ENCODE measurements at regions of chr12 and their contacts with region 1.

Region 1: GRCh38 chr12:64669270-64669842 is 59.1 kb downstream of the RASSF3 start:
- DNase-seq: peak in 30 of 35 experiments; percentile 23 to 88 (median 52)
- ATAC-seq: peak; percentile 87 to 90 (median 88)
- H3K4me3 ChIP-seq: peak overlapping the region; percentile 56 to 75
- H3K4me3 Mint-ChIP-seq: peak overlapping the region; percentile 76 to 90 (median 82)
- H3K27ac ChIP-seq: peak overlapping the region; percentile 91
- H3K27ac Mint-ChIP-seq: peak overlapping the region; percentile 97 to 99
- H3K4me1 ChIP-seq: peaks cover 91 to 93% of the 10 kb centered on the region in 2 experiments
- H3K4me1 Mint-ChIP-seq: peaks cover 94 to 97% (median 95%) of the 10 kb centered on the region in 3 donors
- H3K27me3 ChIP-seq: no peaks in the 10 kb centered on the region
- H3K27me3 Mint-ChIP-seq: no peaks in the 10 kb centered on the region

Region 2: GRCh38 chr12:64318605-64319004 is 350.8 kb before region 1 on chr12:
- CTCF ChIA-PET with region 1: no interaction called
- POLR2A ChIA-PET with region 1: no interaction called
- DNase-seq: no peak
- ATAC-seq: no peak
- H3K4me3 ChIP-seq: no peak overlapping the region
- H3K4me3 Mint-ChIP-seq: no peak overlapping the region
- H3K27ac ChIP-seq: no peak overlapping the region
- H3K27ac Mint-ChIP-seq: no peak overlapping the region
- H3K4me1 ChIP-seq: no peaks in the 10 kb centered on the region
- H3K4me1 Mint-ChIP-seq: no peaks in the 10 kb centered on the region
- H3K27me3 ChIP-seq: peaks cover 0 to 2% of the 10 kb centered on the region in 2 experiments
- H3K27me3 Mint-ChIP-seq: no peaks in the 10 kb centered on the region

Region 3: DNA sequence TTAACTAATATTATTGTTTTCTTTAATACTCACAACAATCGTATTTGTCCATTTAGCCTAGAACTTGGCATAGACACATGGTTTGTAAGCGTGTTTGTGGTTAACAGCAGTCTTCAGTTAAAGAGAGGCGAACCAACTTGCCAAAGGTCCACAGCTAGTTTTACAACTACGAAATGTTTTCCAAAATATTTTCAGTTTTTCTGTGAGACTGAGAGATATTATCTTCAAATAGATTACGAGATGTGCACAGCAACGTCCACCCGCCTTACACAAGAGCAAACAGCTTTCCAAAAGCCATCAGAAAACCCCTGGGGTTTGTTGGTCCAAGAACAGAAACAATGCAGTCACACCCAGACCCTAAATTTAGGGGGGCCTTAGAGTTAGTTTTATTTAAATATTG is 117.7 kb before region 1 on chr12:
- CTCF ChIA-PET with region 1: interaction called, 4 to 17 read pairs
- POLR2A ChIA-PET with region 1: no interaction called
- DNase-seq: no peak
- ATAC-seq: no peak
- H3K4me3 ChIP-seq: no peak overlapping the region
- H3K4me3 Mint-ChIP-seq: no peak overlapping the region
- H3K27ac ChIP-seq: no peak overlapping the region
- H3K27ac Mint-ChIP-seq: no peak overlapping the region
- H3K4me1 ChIP-seq: peaks cover 3 to 4% of the 10 kb centered on the region in 2 experiments
- H3K4me1 Mint-ChIP-seq: peaks cover 7 to 13% (median 10%) of the 10 kb centered on the region in 3 donors
- H3K27me3 ChIP-seq: peaks cover 0 to 4% of the 10 kb centered on the region in 2 experiments
- H3K27me3 Mint-ChIP-seq: peaks cover 0 to 2% of the 10 kb centered on the region in 2 donors

Region 4: DNA sequence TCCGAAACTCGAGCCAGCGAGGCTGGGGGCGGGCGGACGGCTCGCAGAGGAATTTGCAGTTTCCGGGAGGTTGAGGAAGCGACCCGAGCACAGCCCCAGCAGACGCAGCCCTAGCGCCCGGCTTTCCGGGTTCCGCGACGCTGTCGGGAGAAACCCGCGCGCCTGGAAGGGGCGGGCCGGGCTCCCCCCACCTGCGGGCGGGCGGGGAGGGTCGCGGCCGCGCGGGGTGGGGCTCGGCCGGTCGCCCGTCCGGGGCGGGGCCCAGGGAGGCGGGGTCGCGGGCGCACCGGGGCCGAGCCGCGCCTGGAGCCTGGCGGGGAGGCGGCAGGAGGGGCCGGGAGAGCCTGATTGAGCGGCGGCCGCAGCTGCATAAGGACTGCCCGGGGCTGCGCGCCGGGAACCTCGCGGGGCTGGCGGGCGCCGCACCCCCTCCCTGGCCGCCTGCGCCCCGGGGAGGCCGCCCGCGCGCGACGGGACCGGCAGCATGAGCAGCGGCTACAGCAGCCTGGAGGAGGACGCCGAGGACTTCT is 59.1 kb before region 1 on chr12 and contains the start of gene RASSF3:
- CTCF ChIA-PET with region 1: interaction called, 4 read pairs
- POLR2A ChIA-PET with region 1: interaction called, 9 to 11 read pairs
- DNase-seq: peak; percentile 43 to 87 (median 62)
- ATAC-seq: peak; percentile 66 to 73 (median 70)
- H3K4me3 ChIP-seq: peak within 1 kb of the TSS; percentile 84 to 92
- H3K4me3 Mint-ChIP-seq: peak within 1 kb of the TSS; percentile 93 to 99 (median 97)
- H3K27ac ChIP-seq: peak within 1 kb of the TSS; percentile 78
- H3K27ac Mint-ChIP-seq: peak within 1 kb of the TSS; percentile 96 to 99
- H3K4me1 ChIP-seq: peaks cover 19 to 34% of the 10 kb centered on the region in 2 experiments
- H3K4me1 Mint-ChIP-seq: peaks cover 38 to 51% (median 50%) of the 10 kb centered on the region in 3 donors
- H3K27me3 ChIP-seq: no peaks in the 10 kb centered on the region
- H3K27me3 Mint-ChIP-seq: no peaks in the 10 kb centered on the region
- total RNA-seq, gene RASSF3: 113 to 167 (median 149) TPM

Region 5: GRCh38 chr12:64616201-64616600 is 53.2 kb before region 1 on chr12:
- CTCF ChIA-PET with region 1: interaction called, 4 to 5 read pairs
- POLR2A ChIA-PET with region 1: interaction called, 8 to 10 read pairs
- DNase-seq: no peak
- ATAC-seq: no peak
- H3K4me3 ChIP-seq: no peak overlapping the region
- H3K4me3 Mint-ChIP-seq: peak overlapping the region; percentile 17 to 97 (median 38)
- H3K27ac ChIP-seq: no peak overlapping the region
- H3K27ac Mint-ChIP-seq: peak overlapping the region; percentile 77 to 78
- H3K4me1 ChIP-seq: peaks cover 28 to 51% of the 10 kb centered on the region in 2 experiments
- H3K4me1 Mint-ChIP-seq: peaks cover 76 to 84% (median 79%) of the 10 kb centered on the region in 3 donors
- H3K27me3 ChIP-seq: no peaks in the 10 kb centered on the region
- H3K27me3 Mint-ChIP-seq: no peaks in the 10 kb centered on the region

Region 6: DNA sequence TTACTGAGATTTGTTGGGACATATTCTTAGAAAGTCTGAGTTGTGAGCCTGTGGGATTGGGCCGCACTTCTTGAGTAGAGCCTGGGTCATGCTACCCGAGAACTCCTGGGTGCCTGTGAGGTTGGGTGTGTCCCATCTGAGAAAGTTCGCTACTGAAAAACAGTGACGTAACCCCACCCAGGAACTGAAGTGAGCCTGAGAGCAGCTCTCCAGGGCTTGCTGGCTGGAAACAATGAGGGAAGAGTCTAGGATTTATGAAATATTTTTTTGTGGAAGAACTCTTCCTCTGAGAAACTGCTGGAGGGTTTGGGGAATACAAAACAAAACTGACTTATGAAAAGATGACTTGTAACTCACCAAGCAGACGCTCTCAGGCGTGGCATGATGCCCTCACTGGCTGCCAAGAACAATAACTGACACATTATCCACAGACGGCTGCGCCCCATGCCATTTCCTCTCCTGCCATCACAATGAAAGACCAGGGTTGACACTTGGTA is 10.2 kb after region 1 on chr12:
- CTCF ChIA-PET with region 1: interaction called, 6 to 25 read pairs
- POLR2A ChIA-PET with region 1: interaction called, 7 to 32 read pairs
- DNase-seq: peak in 34 of 35 experiments; percentile 62 to 86 (median 76)
- ATAC-seq: peak; percentile 63 to 71 (median 68)
- H3K4me3 ChIP-seq: peak overlapping the region in 1 of 2 donors; percentile 10
- H3K4me3 Mint-ChIP-seq: peak overlapping the region; percentile 64 to 68 (median 67)
- H3K27ac ChIP-seq: peak overlapping the region; percentile 93
- H3K27ac Mint-ChIP-seq: peak overlapping the region; percentile 98 to 99
- H3K4me1 ChIP-seq: peaks cover 87 to 98% of the 10 kb centered on the region in 2 experiments
- H3K4me1 Mint-ChIP-seq: peaks cover 91 to 98% (median 97%) of the 10 kb centered on the region in 3 donors
- H3K27me3 ChIP-seq: no peaks in the 10 kb centered on the region
- H3K27me3 Mint-ChIP-seq: no peaks in the 10 kb centered on the region

Region 7: DNA sequence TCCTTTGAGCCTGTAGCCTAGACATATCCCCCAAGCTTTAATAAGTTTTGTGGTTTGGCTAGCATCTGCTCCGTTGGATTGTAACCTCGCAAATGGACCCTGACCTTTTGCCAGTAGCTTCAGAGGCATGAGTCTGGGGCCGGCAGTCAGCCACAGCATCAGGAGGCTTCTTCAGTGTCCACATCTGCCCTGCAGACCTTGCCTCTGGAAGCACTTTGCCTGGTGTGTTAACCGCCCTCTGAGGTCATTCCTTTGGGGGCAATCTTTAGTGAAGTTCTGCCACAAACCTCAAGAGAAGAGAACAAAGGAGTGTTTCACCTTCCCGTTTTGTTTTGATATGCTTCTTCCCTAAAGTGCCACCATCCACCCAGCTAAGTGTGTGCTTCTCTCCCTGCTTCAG is 18.5 kb after region 1 on chr12:
- CTCF ChIA-PET with region 1: interaction called, 8 to 13 read pairs
- POLR2A ChIA-PET with region 1: interaction called, 6 to 7 read pairs
- DNase-seq: peak in 1 of 35 experiments; percentile 28
- ATAC-seq: peak in 1 of 4 experiments; percentile 11
- H3K4me3 ChIP-seq: no peak overlapping the region
- H3K4me3 Mint-ChIP-seq: peak overlapping the region; percentile 29 to 73 (median 51)
- H3K27ac ChIP-seq: peak overlapping the region; percentile 68
- H3K27ac Mint-ChIP-seq: peak overlapping the region; percentile 88 to 94
- H3K4me1 ChIP-seq: peaks cover 57 to 93% of the 10 kb centered on the region in 2 experiments
- H3K4me1 Mint-ChIP-seq: peaks cover 77 to 86% (median 86%) of the 10 kb centered on the region in 3 donors
- H3K27me3 ChIP-seq: no peaks in the 10 kb centered on the region
- H3K27me3 Mint-ChIP-seq: no peaks in the 10 kb centered on the region